K562 (cell line): ENCODE measurements at regions of chr15 and their contacts with region 1.

Region 1: GRCh38 chr15:70826634-70827033 is 27.3 kb downstream of the LARP6 start:
- DNase-seq: no peak
- ATAC-seq: no peak
- H3K4me3 ChIP-seq: no peak overlapping the region
- H3K27ac ChIP-seq: no peak overlapping the region
- H3K4me1 ChIP-seq: no peaks in the 10 kb centered on the region
- H3K27me3 ChIP-seq: no peaks in the 10 kb centered on the region
- CTCF ChIP-seq: no peak
- EP300 ChIP-seq: no peak
- POLR2A ChIP-seq: no peak
- RAD21 ChIP-seq: no peak

Region 2: GRCh38 chr15:70435369-70435768 is 391.3 kb before region 1 on chr15:
- CTCF ChIA-PET with region 1: no interaction called
- POLR2A ChIA-PET with region 1: no interaction called
- in situ Hi-C with region 1: no loop called
- intact Hi-C with region 1: no loop called
- DNase-seq: no peak
- ATAC-seq: no peak
- H3K4me3 ChIP-seq: no peak overlapping the region
- H3K27ac ChIP-seq: no peak overlapping the region
- H3K4me1 ChIP-seq: peaks cover 19 to 47% of the 10 kb centered on the region in 2 experiments
- H3K27me3 ChIP-seq: no peaks in the 10 kb centered on the region
- CTCF ChIP-seq: no peak
- EP300 ChIP-seq: no peak
- POLR2A ChIP-seq: no peak
- RAD21 ChIP-seq: no peak

Region 3: DNA sequence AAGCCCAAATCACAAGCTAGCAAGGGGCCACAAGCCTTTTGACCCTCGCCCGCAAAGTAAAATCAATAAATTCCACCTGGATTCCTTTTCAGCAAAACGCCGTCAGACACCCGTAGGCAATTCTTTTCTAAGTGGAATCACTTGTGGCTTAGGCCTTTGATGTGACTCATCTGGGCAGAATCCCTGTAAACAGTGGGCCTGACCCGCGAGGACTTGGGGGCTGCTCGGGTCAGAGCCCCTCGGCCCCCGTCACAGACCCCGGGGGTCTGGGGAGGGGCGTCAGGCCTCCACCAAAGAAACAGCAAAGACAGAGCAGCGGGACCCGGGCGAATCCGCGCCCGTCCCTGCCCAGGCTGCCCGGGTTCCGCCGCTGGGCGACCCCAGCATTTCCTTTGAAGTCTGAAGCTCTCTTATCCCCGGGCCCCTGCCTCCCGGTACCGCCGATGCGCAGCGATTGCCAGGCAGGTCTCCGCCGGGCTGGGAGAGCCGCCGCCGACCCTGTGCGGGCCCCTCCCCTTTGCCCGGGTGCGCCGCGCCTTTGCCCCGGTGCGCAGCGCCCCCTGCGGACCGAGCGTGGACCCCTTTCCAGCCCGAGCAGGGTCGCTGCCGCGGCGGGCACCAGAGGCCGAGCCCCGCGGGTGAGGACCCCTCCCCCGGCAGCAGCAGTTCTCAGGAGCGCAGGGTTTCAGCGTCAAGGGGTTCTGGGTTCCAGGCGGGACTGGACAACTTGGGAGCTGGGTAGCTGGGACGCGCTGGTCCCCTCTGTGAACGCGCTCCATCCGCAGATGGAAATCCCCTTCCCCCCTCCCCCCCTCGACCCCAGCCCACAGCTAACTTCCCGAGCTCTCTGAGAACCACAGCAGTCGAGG is 241.6 kb before region 1 on chr15:
- CTCF ChIA-PET with region 1: no interaction called
- POLR2A ChIA-PET with region 1: no interaction called
- in situ Hi-C with region 1: no loop called
- intact Hi-C with region 1: no loop called
- DNase-seq: no peak
- ATAC-seq: no peak
- H3K4me3 ChIP-seq: no peak overlapping the region
- H3K27ac ChIP-seq: no peak overlapping the region
- H3K4me1 ChIP-seq: peaks cover 0 to 6% of the 10 kb centered on the region in 2 experiments; a peak in 2 of 5 replicates
- H3K27me3 ChIP-seq: peaks cover 0 to 20% of the 10 kb centered on the region in 2 experiments; a peak in 1 of 5 replicates
- CTCF ChIP-seq: no peak
- EP300 ChIP-seq: no peak
- POLR2A ChIP-seq: no peak
- RAD21 ChIP-seq: no peak

Region 4: GRCh38 chr15:72135719-72136118 is 1309.1 kb after region 1 on chr15:
- CTCF ChIA-PET with region 1: interaction called, 10 read pairs
- POLR2A ChIA-PET with region 1: no interaction called
- in situ Hi-C with region 1: no loop called
- intact Hi-C with region 1: no loop called
- DNase-seq: no peak
- ATAC-seq: no peak
- H3K4me3 ChIP-seq: no peak overlapping the region
- H3K27ac ChIP-seq: no peak overlapping the region
- H3K4me1 ChIP-seq: no peaks in the 10 kb centered on the region
- H3K27me3 ChIP-seq: peaks cover 5% of the 10 kb centered on the region in 2 experiments; a peak in 2 of 5 replicates
- CTCF ChIP-seq: no peak
- EP300 ChIP-seq: no peak
- POLR2A ChIP-seq: no peak
- RAD21 ChIP-seq: no peak